ENCODE measurements at regions of chr5 and their contacts with region 1.

Region 1: DNA sequence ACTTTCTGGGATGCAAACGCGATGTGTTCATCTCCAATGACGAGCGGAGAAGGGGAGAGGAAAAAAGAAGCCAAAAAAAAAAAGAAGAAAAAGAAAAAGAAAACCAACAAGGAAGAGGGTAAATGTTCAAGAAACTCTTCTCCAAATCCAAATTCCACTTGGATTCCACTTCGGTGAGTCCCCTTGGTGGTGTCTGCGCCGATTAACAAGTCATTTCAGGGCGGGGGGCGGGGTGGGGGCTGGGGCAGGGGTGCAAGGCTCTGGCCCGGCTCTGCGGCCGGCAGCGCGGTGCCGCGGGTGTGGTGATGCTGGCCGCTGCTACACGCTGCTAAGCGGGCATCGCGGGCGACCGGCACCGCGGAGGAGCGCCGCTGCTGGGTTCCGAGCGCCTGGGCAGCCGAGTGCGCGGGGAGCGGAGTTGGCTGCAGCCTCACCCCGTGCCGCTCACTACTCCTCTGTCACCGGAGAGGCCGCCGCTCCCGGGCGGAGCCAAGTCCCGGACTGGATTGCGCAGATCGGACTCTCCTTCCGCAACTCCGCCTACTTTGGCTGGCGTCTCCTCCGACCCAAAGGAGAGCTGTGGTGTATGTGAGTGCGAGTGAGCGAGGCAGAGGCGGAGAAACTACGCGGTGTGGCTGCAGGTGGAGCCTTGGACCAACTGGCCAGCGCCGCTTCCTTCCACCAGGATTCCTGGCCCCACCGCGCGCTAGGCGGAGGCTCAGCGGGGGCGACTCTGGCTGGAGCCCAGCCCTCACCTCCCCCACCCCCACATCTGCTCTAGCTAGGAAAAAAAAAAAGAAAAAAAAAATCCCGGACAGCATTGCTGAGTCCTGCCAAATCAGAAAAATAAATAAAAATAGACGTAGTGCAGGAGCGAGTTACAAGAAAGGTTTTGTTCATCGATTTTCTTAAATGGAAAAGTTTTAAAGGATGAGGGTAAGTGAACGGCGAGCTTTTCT is at the start of gene SEMA6A:
- DNase-seq: peak; percentile 91 to 94 (median 93)
- ATAC-seq: peak; percentile 87 to 94 (median 90)
- H3K4me3 ChIP-seq: peak within 1 kb of the TSS; percentile 42 to 84 (median 68)
- H3K27ac ChIP-seq: peak within 1 kb of the TSS; percentile 38 to 85 (median 80)
- H3K4me1 ChIP-seq: peaks cover 0 to 43% (median 23%) of the 10 kb centered on the region in 12 donors
- H3K27me3 ChIP-seq: peaks cover 0 to 63% (median 6%) of the 10 kb centered on the region in 9 donors
- CTCF ChIP-seq: peak in 3 of 12 donors; percentile 8 to 28 (median 9)
- POLR2A ChIP-seq: peak in 1 of 2 donors; percentile 69
- total RNA-seq, gene SEMA6A: 4.2 to 12.7 (median 7.2) TPM

Region 2: DNA sequence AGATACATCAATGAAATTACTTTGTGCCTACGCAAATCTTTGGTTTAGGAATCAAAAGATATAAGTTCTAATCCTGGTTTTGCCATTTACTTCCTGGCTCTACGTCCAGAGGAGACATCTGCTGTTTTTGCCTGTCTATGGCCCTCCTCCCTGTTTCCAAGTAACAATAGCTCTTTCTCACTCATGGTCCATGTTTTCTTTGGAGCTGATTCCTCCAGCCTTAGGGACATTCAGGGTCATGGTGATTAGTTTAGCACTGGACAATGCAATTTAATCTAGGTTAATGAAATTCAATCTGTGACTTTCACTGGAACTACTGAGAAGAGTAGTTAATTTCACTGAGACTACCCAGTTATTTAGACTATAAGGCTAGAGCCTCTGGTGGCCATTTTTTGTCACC is 170.6 kb before region 1 on chr5:
- intact Hi-C with region 1: loop called in 1 of 10 experiments (anchors 5 kb)
- DNase-seq: no peak
- ATAC-seq: peak in 3 of 4 donors; percentile 59 to 90 (median 67)
- H3K4me3 ChIP-seq: no peak overlapping the region
- H3K27ac ChIP-seq: no peak overlapping the region
- H3K4me1 ChIP-seq: peaks cover 0 to 25% (median 10%) of the 10 kb centered on the region in 12 donors
- H3K27me3 ChIP-seq: no peaks in the 10 kb centered on the region
- CTCF ChIP-seq: no peak
- POLR2A ChIP-seq: no peak

Region 3: GRCh38 chr5:116613445-116613844 is 38.8 kb after region 1 on chr5:
- intact Hi-C with region 1: no loop called
- DNase-seq: no peak
- ATAC-seq: no peak
- H3K4me3 ChIP-seq: no peak overlapping the region
- H3K27ac ChIP-seq: no peak overlapping the region
- H3K4me1 ChIP-seq: peaks cover 0 to 9% (median 0%) of the 10 kb centered on the region in 12 donors
- H3K27me3 ChIP-seq: no peaks in the 10 kb centered on the region
- CTCF ChIP-seq: no peak
- POLR2A ChIP-seq: no peak

Region 4: DNA sequence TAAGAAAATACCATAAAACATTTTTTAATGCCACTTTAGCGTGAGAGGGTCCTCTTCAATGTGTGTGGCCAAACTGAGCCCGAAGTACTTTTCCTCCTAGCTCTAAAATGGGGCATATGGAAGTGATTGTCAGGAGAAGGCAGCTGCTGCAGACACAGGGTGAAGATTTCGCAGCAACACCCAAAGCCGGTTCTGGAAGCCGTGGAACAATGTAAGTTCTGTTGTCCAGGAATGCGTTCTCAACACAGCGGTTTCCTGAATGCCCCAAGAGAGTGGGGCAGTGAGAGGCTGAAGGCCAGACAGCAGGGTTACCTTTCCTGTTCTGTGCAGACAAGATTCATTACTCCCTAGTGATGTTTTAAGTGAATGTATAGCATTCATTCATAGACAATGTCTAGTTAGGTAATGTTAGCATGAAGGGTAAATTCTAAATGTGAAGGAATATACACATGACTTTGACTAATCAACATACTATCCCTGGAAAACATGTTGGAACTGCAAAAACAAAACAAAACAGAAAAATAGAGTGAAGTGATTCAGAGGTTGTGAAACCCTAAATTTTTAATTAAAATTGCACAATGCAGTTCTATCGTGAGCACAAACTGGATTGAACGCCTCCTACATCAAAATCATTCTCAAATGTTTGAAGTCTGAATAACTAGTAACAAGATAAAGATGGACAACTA is 197.0 kb after region 1 on chr5:
- intact Hi-C with region 1: loop called in 1 of 10 experiments (anchors 5 kb)
- DNase-seq: peak in 3 of 5 donors; percentile 8 to 47 (median 33)
- ATAC-seq: peak; percentile 32 to 80 (median 64)
- H3K4me3 ChIP-seq: no peak overlapping the region
- H3K27ac ChIP-seq: peak overlapping the region in 1 of 12 donors; percentile 18
- H3K4me1 ChIP-seq: peaks cover 0 to 12% (median 0%) of the 10 kb centered on the region in 12 donors
- H3K27me3 ChIP-seq: no peaks in the 10 kb centered on the region
- CTCF ChIP-seq: no peak
- POLR2A ChIP-seq: no peak

Region 5: DNA sequence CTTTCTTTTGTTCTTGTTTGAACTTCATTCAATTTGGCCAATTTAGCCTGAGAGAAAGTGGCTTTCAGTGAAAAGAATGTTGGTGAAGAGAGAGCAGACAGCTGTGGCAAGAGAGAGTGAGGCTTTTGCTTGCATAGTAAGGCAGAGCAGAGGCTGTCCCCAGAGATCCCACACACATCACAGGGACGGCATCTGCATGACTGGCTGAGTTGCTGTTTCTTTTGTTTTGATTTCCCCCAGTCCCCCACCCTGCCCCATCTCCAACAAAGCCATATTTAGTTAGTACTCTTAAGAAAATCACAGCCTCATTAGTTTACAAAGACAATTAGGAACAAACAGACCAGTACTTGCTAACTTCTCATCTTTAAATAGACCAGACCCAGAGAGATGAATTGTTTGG is 363.8 kb after region 1 on chr5:
- intact Hi-C with region 1: loop called in 2 of 10 experiments (anchors 2 to 10 kb)
- DNase-seq: peak in 2 of 5 donors; percentile 23 to 24
- ATAC-seq: peak in 2 of 4 donors; percentile 32 to 62
- H3K4me3 ChIP-seq: no peak overlapping the region
- H3K27ac ChIP-seq: no peak overlapping the region
- H3K4me1 ChIP-seq: peaks cover 0 to 18% (median 4%) of the 10 kb centered on the region in 12 donors
- H3K27me3 ChIP-seq: no peaks in the 10 kb centered on the region
- CTCF ChIP-seq: no peak
- POLR2A ChIP-seq: no peak

Measured in heart left ventricle (tissue), 16 donors.